Naive thymus-derived CD4-positive, alpha-beta T cell (primary cell): ENCODE measurements at regions of chr2 and their contacts with region 1.

Region 1: GRCh38 chr2:112584134-112584890 is at the start of gene CHCHD5:
- DNase-seq: peak; percentile 72 to 95 (median 93)
- ATAC-seq: peak; percentile 94
- H3K4me3 ChIP-seq: peak within 1 kb of the TSS; percentile 76
- H3K4me3 Mint-ChIP-seq: peak within 1 kb of the TSS; percentile 91 to 98 (median 96)
- H3K27ac ChIP-seq: peak within 1 kb of the TSS; percentile 79
- H3K27ac Mint-ChIP-seq: peak within 1 kb of the TSS; percentile 93 to 99 (median 96)
- H3K4me1 ChIP-seq: peaks cover 11 to 15% of the 10 kb centered on the region in 2 donors
- H3K4me1 Mint-ChIP-seq: peaks cover 26 to 49% (median 38%) of the 10 kb centered on the region in 7 donors
- H3K27me3 ChIP-seq: no peaks in the 10 kb centered on the region
- H3K27me3 Mint-ChIP-seq: peaks cover 0 to 2% (median 0%) of the 10 kb centered on the region in 5 donors
- total RNA-seq, gene CHCHD5: 17.4 to 31.9 (median 21.1) TPM

Region 2: DNA sequence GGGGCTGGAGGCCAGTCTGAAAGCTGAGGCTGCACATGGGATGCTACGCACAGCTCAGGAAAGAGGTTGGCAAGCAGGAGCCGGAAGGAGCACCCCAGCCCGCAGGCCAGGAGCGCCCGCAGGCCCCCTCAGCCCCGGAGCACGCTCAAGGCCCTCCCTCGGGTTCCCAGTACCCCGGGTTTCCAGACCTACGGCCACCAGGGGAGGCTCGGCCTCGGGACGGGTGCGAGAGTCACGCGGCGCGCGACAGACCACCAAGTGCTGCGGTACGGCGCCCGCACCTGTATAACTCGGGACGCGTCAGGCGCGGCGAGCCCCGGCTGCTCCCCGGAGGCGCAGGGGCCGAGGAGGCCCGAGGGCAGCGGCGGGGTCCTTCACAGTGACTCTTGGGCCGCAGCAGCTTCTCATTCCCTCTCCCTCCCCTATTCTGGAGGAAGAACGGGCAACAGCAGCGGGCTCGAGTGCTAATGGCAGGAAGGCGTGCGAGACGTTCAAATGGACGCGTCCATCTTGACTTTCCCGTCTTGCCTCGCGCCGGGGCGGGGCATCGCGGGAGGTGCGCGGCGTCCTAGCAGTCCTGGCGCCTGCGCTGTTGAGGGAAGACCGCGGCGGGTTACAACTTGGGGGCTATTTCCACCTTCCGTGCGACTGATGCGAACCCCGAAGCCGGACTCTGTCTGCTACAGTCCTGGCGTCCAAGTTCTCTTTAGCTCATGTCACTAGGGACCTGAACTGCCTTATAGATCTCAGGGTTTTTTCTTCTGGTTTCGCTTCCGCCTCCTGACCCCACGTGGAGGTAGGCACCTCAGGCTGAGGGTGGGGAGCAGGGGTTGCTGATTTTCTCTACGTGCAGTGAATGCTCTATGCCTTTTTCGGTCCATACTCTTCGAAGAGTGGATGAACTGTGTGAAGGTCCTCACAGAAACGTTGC is 700.4 kb before region 1 on chr2 and contains the start of gene ANAPC1:
- CTCF ChIA-PET with region 1: no interaction called
- POLR2A ChIA-PET with region 1: interaction called, 3 read pairs
- intact Hi-C with region 1: loop called (anchors 5 kb)
- DNase-seq: peak; percentile 75 to 87 (median 84)
- ATAC-seq: peak; percentile 98
- H3K4me3 ChIP-seq: peak within 1 kb of the TSS; percentile 69
- H3K4me3 Mint-ChIP-seq: peak within 1 kb of the TSS; percentile 92 to 99 (median 96)
- H3K27ac ChIP-seq: peak within 1 kb of the TSS; percentile 85
- H3K27ac Mint-ChIP-seq: peak within 1 kb of the TSS; percentile 92 to 98 (median 96)
- H3K4me1 ChIP-seq: peaks cover 0 to 10% of the 10 kb centered on the region in 2 donors
- H3K4me1 Mint-ChIP-seq: peaks cover 2 to 26% (median 13%) of the 10 kb centered on the region in 7 donors
- H3K27me3 ChIP-seq: no peaks in the 10 kb centered on the region
- H3K27me3 Mint-ChIP-seq: no peaks in the 10 kb centered on the region
- total RNA-seq, gene ANAPC1: 51.8 to 77.2 (median 62.7) TPM

Region 3: DNA sequence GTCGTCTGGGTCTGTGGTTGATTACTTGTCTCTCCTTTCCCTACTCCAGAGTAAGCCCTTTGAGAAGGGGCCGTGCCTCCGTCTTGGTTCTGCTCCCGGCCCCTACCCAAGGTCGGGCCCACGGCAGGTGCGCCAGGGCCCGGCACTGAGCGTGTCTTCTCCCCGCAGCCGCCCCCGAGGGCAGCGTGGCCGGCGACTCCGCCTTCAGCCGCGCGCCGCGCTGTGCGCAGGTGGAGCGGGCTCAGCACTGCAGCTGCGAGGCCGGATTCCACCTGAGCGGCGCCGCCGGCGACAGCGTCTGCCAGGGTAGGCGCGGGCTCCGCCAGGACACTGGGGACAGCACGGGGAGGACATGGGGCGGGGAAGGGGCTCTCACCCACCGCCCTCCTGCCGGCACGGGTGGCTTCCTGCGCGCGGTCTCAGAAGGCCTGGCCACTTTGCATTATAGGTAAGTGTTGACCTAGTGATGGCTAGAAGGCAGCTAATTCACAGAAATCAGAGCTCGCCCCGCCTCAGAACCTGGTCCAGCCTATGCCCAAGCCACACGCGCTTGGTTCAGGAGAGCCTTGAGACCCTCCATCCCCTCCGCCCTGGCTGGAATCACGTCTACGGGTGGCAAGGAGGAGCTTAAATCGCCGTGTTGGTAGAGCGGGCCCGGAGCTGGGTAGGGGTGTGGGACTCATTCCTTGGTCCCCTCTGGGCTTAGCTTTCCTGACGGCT is 402.6 kb before region 1 on chr2:
- CTCF ChIA-PET with region 1: no interaction called
- POLR2A ChIA-PET with region 1: no interaction called
- intact Hi-C with region 1: loop called in 1 of 2 experiments (anchors 5 kb)
- DNase-seq: peak; percentile 53 to 76 (median 71)
- ATAC-seq: peak; percentile 89
- H3K4me3 ChIP-seq: peak overlapping the region; percentile 71
- H3K4me3 Mint-ChIP-seq: peak overlapping the region; percentile 85 to 94 (median 90)
- H3K27ac ChIP-seq: peak overlapping the region; percentile 89
- H3K27ac Mint-ChIP-seq: peak overlapping the region; percentile 87 to 99 (median 96)
- H3K4me1 ChIP-seq: peaks cover 0 to 32% of the 10 kb centered on the region in 2 donors
- H3K4me1 Mint-ChIP-seq: peaks cover 28 to 71% (median 63%) of the 10 kb centered on the region in 7 donors
- H3K27me3 ChIP-seq: no peaks in the 10 kb centered on the region
- H3K27me3 Mint-ChIP-seq: peaks cover 0 to 11% (median 0%) of the 10 kb centered on the region in 5 donors

Region 4: GRCh38 chr2:112275306-112275886 is 308.9 kb before region 1 on chr2 and contains the start of gene ZC3H6:
- CTCF ChIA-PET with region 1: no interaction called
- POLR2A ChIA-PET with region 1: interaction called, 3 read pairs
- intact Hi-C with region 1: loop called (anchors 1 kb)
- DNase-seq: peak; percentile 96 to 100 (median 100)
- ATAC-seq: peak; percentile 98
- H3K4me3 ChIP-seq: peak within 1 kb of the TSS; percentile 99
- H3K4me3 Mint-ChIP-seq: peak within 1 kb of the TSS; percentile 85 to 95 (median 94)
- H3K27ac ChIP-seq: peak within 1 kb of the TSS; percentile 100
- H3K27ac Mint-ChIP-seq: peak within 1 kb of the TSS; percentile 90 to 99 (median 98)
- H3K4me1 ChIP-seq: peaks cover 14 to 18% of the 10 kb centered on the region in 2 donors
- H3K4me1 Mint-ChIP-seq: peaks cover 9 to 36% (median 25%) of the 10 kb centered on the region in 7 donors
- H3K27me3 ChIP-seq: no peaks in the 10 kb centered on the region
- H3K27me3 Mint-ChIP-seq: peaks cover 0 to 3% (median 0%) of the 10 kb centered on the region in 5 donors
- total RNA-seq, gene ZC3H6: 11.8 to 42.1 (median 23.7) TPM

Region 5: GRCh38 chr2:112626604-112627059 is 42.3 kb after region 1 on chr2:
- CTCF ChIA-PET with region 1: interaction called, 5 read pairs
- POLR2A ChIA-PET with region 1: interaction called, 6 read pairs
- intact Hi-C with region 1: loop called (anchors 1 to 2 kb)
- DNase-seq: peak; percentile 47 to 81 (median 67)
- ATAC-seq: peak; percentile 70
- H3K4me3 ChIP-seq: peak overlapping the region; percentile 61
- H3K4me3 Mint-ChIP-seq: peak overlapping the region; percentile 47 to 81 (median 72)
- H3K27ac ChIP-seq: peak overlapping the region; percentile 29
- H3K27ac Mint-ChIP-seq: peak overlapping the region in 8 of 9 donors; percentile 80 to 99 (median 94)
- H3K4me1 ChIP-seq: peaks cover 49 to 64% of the 10 kb centered on the region in 2 donors
- H3K4me1 Mint-ChIP-seq: peaks cover 34 to 88% (median 55%) of the 10 kb centered on the region in 7 donors
- H3K27me3 ChIP-seq: no peaks in the 10 kb centered on the region
- H3K27me3 Mint-ChIP-seq: no peaks in the 10 kb centered on the region

Region 6: GRCh38 chr2:112726497-112727190 is 142.3 kb after region 1 on chr2:
- CTCF ChIA-PET with region 1: no interaction called
- POLR2A ChIA-PET with region 1: no interaction called
- intact Hi-C with region 1: loop called in 1 of 2 experiments (anchors 5 kb)
- DNase-seq: peak; percentile 68 to 89 (median 83)
- ATAC-seq: peak; percentile 96
- H3K4me3 ChIP-seq: no peak overlapping the region
- H3K4me3 Mint-ChIP-seq: no peak overlapping the region
- H3K27ac ChIP-seq: no peak overlapping the region
- H3K27ac Mint-ChIP-seq: peak overlapping the region in 2 of 9 donors; percentile 51 to 73
- H3K4me1 ChIP-seq: no peaks in the 10 kb centered on the region
- H3K4me1 Mint-ChIP-seq: peaks cover 0 to 29% (median 0%) of the 10 kb centered on the region in 7 donors
- H3K27me3 ChIP-seq: no peaks in the 10 kb centered on the region
- H3K27me3 Mint-ChIP-seq: peaks cover 0 to 2% (median 0%) of the 10 kb centered on the region in 5 donors

Region 7: GRCh38 chr2:112958428-112959108 is 374.3 kb after region 1 on chr2:
- CTCF ChIA-PET with region 1: no interaction called
- POLR2A ChIA-PET with region 1: no interaction called
- intact Hi-C with region 1: no loop called
- DNase-seq: peak in 6 of 9 donors; percentile 24 to 63 (median 52)
- ATAC-seq: peak; percentile 87
- H3K4me3 ChIP-seq: no peak overlapping the region
- H3K4me3 Mint-ChIP-seq: no peak overlapping the region
- H3K27ac ChIP-seq: no peak overlapping the region
- H3K27ac Mint-ChIP-seq: no peak overlapping the region
- H3K4me1 ChIP-seq: no peaks in the 10 kb centered on the region
- H3K4me1 Mint-ChIP-seq: no peaks in the 10 kb centered on the region
- H3K27me3 ChIP-seq: no peaks in the 10 kb centered on the region
- H3K27me3 Mint-ChIP-seq: peaks cover 0 to 8% (median 0%) of the 10 kb centered on the region in 5 donors